HCT116 (cell line): ENCODE measurements at regions of chr1 and their contacts with region 1.

Region 1: DNA sequence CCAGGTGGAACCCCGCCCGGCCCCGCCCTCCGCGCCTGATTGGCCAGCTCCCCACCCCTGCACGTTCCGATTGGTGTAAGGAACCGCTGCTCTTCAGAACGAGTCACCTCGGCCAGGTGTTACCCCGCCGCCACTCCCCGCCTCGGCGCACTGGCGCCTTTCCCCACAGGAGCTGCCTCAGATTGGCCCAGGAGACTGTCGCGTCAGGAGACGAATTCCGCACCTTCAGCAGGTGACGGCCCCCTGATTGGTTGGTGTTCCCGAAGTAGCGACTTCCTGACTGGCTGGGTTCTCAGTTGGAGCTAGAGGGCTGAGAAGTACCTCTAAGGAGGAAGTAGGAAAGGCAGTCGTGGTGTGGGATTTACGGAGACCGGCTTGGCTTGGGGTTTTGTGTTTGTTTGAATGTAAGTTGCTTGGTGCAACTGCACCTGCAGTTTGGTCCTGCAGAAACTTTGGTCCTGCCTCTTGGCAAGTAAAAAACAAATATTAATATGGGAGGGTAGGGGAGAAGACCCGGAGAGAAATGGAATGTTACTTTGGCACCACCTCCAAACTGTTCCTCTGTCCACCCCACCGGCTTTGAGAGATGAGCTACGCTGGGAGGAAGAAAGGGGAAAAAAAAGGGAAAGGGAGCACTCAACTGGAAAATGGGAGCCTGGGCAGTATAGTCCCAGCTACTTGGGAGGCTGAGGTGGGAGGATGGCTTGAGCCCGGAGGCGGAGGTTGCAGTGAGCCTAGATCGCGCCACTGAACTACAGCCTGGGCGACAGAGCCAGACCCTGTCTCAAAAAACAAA is 411 bp upstream of the F11R start:
- DNase-seq: peak; percentile 99
- ATAC-seq: peak; percentile 96
- H3K4me3 ChIP-seq: peak overlapping the region; percentile 96 to 97
- H3K27ac ChIP-seq: peak overlapping the region; percentile 68
- H3K4me1 ChIP-seq: peaks cover 18 to 49% of the 10 kb centered on the region in 2 experiments
- H3K27me3 ChIP-seq: no peaks in the 10 kb centered on the region
- CTCF ChIP-seq: no peak
- POLR2A ChIP-seq: peak; percentile 41
- RAD21 ChIP-seq: no peak

Region 2: DNA sequence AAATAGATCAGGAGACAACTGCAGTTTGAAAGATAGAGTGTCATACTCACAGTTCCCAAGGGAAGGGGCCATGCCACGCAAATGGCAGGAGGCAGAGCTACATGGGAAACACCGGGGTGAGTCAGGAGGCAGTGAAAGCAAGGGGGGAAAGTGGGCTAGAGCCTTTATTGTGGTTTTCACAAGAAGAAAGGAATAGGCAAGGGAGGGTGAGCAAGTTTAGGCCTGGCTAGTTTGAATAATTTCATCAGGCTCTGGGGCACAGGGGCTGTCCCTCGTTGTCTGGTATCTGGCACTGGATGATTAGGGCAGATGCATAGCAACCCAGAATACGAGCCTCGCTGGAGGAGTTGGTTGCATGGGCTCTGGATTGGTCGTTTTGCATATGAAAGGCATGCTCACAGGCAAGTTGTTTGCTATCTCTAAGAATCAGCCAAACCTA is 49.7 kb before region 1 on chr1:
- CTCF ChIA-PET with region 1: no interaction called
- POLR2A ChIA-PET with region 1: no interaction called
- RAD21 ChIA-PET with region 1: no interaction called
- intact Hi-C with region 1: no loop called
- DNase-seq: no peak
- ATAC-seq: no peak
- H3K4me3 ChIP-seq: no peak overlapping the region
- H3K27ac ChIP-seq: no peak overlapping the region
- H3K4me1 ChIP-seq: no peaks in the 10 kb centered on the region
- H3K27me3 ChIP-seq: no peaks in the 10 kb centered on the region
- CTCF ChIP-seq: no peak
- POLR2A ChIP-seq: no peak
- RAD21 ChIP-seq: no peak

Region 3: GRCh38 chr1:160997323-160998038 is 23.9 kb before region 1 on chr1:
- CTCF ChIA-PET with region 1: interaction called, 19 read pairs
- POLR2A ChIA-PET with region 1: interaction called, 22 read pairs
- RAD21 ChIA-PET with region 1: interaction called in 1 of 2 experiments, 4 read pairs
- intact Hi-C with region 1: no loop called
- DNase-seq: peak; percentile 51
- ATAC-seq: peak; percentile 71
- H3K4me3 ChIP-seq: no peak overlapping the region
- H3K27ac ChIP-seq: peak overlapping the region; percentile 61
- H3K4me1 ChIP-seq: peaks cover 30 to 60% of the 10 kb centered on the region in 2 experiments
- H3K27me3 ChIP-seq: no peaks in the 10 kb centered on the region
- CTCF ChIP-seq: peak; percentile 58 to 75 (median 73); a peak in 5 of 6 replicates
- POLR2A ChIP-seq: no peak
- RAD21 ChIP-seq: peak; percentile 75

Region 4: DNA sequence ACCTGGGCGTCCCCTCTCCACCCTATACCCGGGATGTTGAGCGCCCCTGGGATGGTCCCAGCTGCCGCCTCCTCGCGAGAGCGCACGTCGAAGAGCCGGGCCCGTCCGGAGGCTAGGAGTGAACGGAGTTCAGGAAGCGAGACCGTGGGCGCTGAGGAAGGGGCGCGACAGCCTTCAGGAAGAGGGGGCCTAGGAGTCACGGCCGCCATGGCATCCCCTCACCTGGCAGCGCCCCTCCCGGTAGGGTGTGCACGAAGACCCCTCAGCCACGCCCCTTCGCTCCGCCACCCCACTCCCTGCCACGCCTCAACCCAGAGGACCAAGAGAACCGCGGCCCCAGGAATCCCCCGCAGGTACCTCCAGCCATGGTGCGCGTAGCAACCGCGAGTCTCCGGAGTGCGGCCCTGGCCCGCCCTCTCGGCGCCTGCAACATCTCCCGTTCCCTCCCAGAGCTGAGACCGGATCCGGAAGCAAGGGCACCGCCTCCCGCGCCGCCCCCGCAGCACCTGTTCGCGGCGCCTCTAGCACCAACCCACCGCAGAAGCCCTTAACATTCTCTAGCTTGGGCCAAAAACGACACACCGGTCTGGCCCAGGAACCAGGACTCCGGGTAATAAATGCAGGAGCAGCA is 17.3 kb after region 1 on chr1 and contains the start of gene TSTD1:
- CTCF ChIA-PET with region 1: interaction called, 7 read pairs
- POLR2A ChIA-PET with region 1: interaction called, 24 read pairs
- RAD21 ChIA-PET with region 1: no interaction called
- intact Hi-C with region 1: no loop called
- DNase-seq: no peak
- ATAC-seq: peak; percentile 83
- H3K4me3 ChIP-seq: peak within 1 kb of the TSS; percentile 76 to 88
- H3K27ac ChIP-seq: peak within 1 kb of the TSS; percentile 88
- H3K4me1 ChIP-seq: peaks cover 14 to 32% of the 10 kb centered on the region in 2 experiments
- H3K27me3 ChIP-seq: no peaks in the 10 kb centered on the region
- CTCF ChIP-seq: no peak
- POLR2A ChIP-seq: peak; percentile 57
- RAD21 ChIP-seq: no peak
- total RNA-seq, gene TSTD1: 116 TPM

Region 5: DNA sequence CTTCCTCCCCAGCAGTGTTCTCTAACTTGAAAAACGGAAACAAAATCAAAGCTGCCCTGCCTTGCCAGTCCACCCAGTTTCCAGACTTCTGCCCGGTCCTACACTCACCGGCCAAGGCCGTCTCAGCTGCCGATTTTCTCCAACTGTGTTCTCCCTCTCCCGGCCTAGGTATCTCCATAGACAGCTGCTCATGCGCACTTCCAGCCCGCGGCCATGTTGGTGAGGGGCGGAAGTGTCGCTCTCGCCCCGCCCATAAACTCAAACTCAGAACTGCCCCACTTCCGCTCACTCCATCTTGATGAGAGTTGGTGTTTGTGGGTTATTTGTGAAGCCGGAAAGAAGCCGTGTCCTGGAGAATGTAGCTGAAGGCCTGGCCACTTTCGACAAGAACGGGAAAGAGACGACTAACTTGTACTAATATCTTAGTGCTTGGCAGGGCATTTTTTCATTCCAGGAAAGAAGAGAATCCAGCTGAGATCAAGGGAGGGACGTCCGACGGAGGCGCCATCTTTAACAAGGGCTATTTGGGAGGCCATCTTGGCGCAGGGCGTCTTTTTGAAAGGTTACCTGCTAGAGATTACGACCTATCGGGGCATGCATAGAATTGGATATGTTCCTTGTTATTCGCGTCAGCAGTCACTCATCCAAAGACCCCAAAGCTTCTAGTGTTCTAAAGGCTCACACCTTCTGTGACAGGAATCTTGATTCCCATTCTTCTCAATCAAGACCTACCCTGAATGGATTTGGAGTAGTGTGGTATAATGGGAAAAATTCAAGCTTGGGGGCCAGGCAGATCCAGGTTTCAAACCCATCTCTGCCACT is 24.6 kb after region 1 on chr1 and contains the start of gene USF1:
- CTCF ChIA-PET with region 1: interaction called, 7 read pairs
- POLR2A ChIA-PET with region 1: interaction called, 18 read pairs
- RAD21 ChIA-PET with region 1: interaction called in 1 of 2 experiments, 5 read pairs
- intact Hi-C with region 1: no loop called
- DNase-seq: peak; percentile 90
- ATAC-seq: peak; percentile 81
- H3K4me3 ChIP-seq: peak within 1 kb of the TSS; percentile 66 to 70
- H3K27ac ChIP-seq: peak within 1 kb of the TSS; percentile 85
- H3K4me1 ChIP-seq: peaks cover 5 to 17% of the 10 kb centered on the region in 2 experiments; a peak in 2 of 4 replicates
- H3K27me3 ChIP-seq: no peaks in the 10 kb centered on the region
- CTCF ChIP-seq: no peak
- POLR2A ChIP-seq: no peak
- RAD21 ChIP-seq: no peak
- total RNA-seq, gene USF1: 48.0 TPM

Region 6: DNA sequence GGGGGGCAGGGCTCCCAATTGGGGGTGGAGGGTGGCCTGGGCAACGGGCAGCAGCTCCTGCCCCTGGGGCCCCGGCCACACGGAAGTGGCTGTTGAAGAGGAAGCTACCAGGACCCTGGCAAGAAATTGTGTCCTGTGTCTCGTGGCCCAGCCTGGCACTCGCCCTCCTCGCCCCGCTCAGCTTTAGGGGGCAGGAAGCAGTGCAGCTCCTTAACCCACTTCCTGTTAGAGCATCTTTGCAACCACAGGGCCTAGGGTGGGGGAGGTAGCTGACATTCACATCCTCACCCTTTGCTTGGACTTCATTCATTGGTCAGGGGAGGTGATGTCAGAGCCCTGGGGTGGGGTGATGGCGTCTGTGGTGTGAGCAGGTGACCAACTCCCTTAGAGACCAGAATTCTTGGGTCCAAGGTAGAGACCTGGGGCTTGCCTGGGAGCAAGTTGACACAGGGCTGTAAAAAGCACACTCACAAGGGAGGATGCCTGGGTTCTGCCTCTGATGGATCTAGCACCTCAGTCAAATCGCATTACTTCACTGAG is 48.4 kb after region 1 on chr1 and contains the start of gene ARHGAP30:
- CTCF ChIA-PET with region 1: no interaction called
- POLR2A ChIA-PET with region 1: no interaction called
- RAD21 ChIA-PET with region 1: no interaction called
- intact Hi-C with region 1: no loop called
- DNase-seq: no peak
- ATAC-seq: no peak
- H3K4me3 ChIP-seq: no peak within 1 kb of the TSS
- H3K27ac ChIP-seq: no peak within 1 kb of the TSS
- H3K4me1 ChIP-seq: peaks cover 0 to 34% of the 10 kb centered on the region in 2 experiments; a peak in 2 of 4 replicates
- H3K27me3 ChIP-seq: no peaks in the 10 kb centered on the region
- CTCF ChIP-seq: no peak
- POLR2A ChIP-seq: no peak
- RAD21 ChIP-seq: no peak
- total RNA-seq, gene ARHGAP30: 0.39 TPM

Region 7: GRCh38 chr1:161098210-161099068 is 77.1 kb after region 1 on chr1 and contains the start of gene KLHDC9:
- CTCF ChIA-PET with region 1: no interaction called
- POLR2A ChIA-PET with region 1: interaction called, 7 read pairs
- RAD21 ChIA-PET with region 1: no interaction called
- intact Hi-C with region 1: loop called (anchors 5 kb)
- DNase-seq: peak; percentile 69
- ATAC-seq: peak; percentile 84
- H3K4me3 ChIP-seq: peak within 1 kb of the TSS; percentile 41 to 43
- H3K27ac ChIP-seq: peak within 1 kb of the TSS; percentile 50
- H3K4me1 ChIP-seq: peaks cover 3 to 26% of the 10 kb centered on the region in 2 experiments; a peak in 3 of 4 replicates
- H3K27me3 ChIP-seq: no peaks in the 10 kb centered on the region
- CTCF ChIP-seq: no peak
- POLR2A ChIP-seq: no peak
- RAD21 ChIP-seq: no peak
- total RNA-seq, gene KLHDC9: 1.4 TPM

Region 8: GRCh38 chr1:161153679-161154426 is 132.5 kb after region 1 on chr1 and contains the start of gene UFC1:
- CTCF ChIA-PET with region 1: no interaction called
- POLR2A ChIA-PET with region 1: no interaction called
- RAD21 ChIA-PET with region 1: no interaction called
- intact Hi-C with region 1: loop called (anchors 5 kb)
- DNase-seq: peak; percentile 87
- ATAC-seq: peak; percentile 92
- H3K4me3 ChIP-seq: peak within 1 kb of the TSS; percentile 66 to 87
- H3K27ac ChIP-seq: peak within 1 kb of the TSS; percentile 99
- H3K4me1 ChIP-seq: peaks cover 5 to 20% of the 10 kb centered on the region in 2 experiments; a peak in 3 of 4 replicates
- H3K27me3 ChIP-seq: no peaks in the 10 kb centered on the region
- CTCF ChIP-seq: no peak
- POLR2A ChIP-seq: no peak
- RAD21 ChIP-seq: no peak
- total RNA-seq, gene UFC1: 63.7 TPM